ENCODE measurements at regions of chr6 and their contacts with region 1.

Region 1: GRCh38 chr6:132813173-132813856 is 1.1 kb upstream of the RPS12 start:
- DNase-seq: peak in 3 of 10 donors; percentile 22 to 44 (median 35)
- H3K4me3 ChIP-seq: peak overlapping the region; percentile 53 to 100 (median 93)
- H3K27ac ChIP-seq: peak overlapping the region; percentile 69 to 97 (median 91)
- H3K27me3 ChIP-seq: no peaks in the 10 kb centered on the region
- CTCF ChIP-seq: peak in 3 of 56 donors; percentile 6 to 14 (median 14)

Region 2: GRCh38 chr6:132512638-132513632 is 300.4 kb before region 1 on chr6 and contains the start of gene STX7:
- intact Hi-C with region 1: loop called (anchors 5 kb)
- DNase-seq: peak; percentile 90 to 96 (median 94)
- H3K4me3 ChIP-seq: peak within 1 kb of the TSS; percentile 64 to 99 (median 91)
- H3K27ac ChIP-seq: peak within 1 kb of the TSS; percentile 63 to 97 (median 91)
- H3K27me3 ChIP-seq: no peaks in the 10 kb centered on the region
- CTCF ChIP-seq: peak in 18 of 56 donors; percentile 5 to 49 (median 22)
- total RNA-seq, gene STX7: 62.8 to 127 (median 99.9) TPM